GM23248 (cell line): ENCODE measurements at regions of chr1 and their contacts with region 1.

Region 1: DNA sequence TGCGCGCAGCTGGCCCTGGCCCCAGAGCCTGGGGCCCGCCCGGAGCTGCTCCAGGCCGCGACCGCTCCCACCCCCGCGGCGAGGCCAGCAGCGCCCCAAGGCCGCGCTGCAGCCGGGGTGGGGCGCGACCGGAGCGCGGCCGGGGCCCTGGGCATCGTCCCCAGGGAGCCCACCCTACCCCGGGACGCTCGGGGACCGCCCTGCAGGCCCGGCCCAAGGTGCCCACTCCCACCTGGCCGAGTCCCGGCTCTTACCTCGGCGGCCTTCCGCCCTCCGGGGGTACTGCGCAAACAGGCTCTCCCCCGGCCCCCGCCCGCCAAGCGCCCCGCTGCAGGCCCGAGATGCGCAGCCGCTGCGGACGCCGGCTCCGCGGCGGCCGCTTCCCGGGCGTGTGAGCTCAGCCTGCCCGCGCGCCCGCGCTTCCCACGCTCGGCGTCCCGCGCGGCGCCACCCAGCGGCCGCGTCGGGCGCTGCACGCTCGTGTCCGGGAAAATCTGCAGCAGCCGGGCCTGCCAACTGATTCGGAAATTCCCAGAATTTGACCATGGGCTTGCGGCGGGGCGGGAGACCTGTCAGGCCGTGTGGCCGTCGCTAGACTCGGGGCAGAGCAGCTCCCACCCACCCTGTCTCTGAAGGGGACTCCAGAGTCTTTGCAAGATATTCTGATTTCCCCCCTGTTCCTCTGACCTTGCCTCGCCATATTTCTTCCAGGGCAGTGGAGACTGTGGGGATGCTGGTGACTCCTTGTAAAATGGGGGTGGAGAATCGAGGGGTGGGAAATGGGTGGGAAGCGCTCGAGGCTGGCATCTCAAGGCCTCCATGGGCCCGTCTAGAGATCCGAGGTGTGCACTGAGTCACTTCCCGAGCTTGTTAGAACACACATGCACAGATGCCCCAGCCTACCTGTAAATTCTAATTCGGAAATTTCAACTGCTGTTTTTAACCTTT is 41.9 kb downstream of the CD34 start:
- DNase-seq: peak; percentile 88
- H3K4me3 ChIP-seq: peak overlapping the region; percentile 81
- H3K27ac ChIP-seq: no peak overlapping the region
- H3K4me1 ChIP-seq: no peaks in the 10 kb centered on the region
- H3K27me3 ChIP-seq: no peaks in the 10 kb centered on the region

Region 2: DNA sequence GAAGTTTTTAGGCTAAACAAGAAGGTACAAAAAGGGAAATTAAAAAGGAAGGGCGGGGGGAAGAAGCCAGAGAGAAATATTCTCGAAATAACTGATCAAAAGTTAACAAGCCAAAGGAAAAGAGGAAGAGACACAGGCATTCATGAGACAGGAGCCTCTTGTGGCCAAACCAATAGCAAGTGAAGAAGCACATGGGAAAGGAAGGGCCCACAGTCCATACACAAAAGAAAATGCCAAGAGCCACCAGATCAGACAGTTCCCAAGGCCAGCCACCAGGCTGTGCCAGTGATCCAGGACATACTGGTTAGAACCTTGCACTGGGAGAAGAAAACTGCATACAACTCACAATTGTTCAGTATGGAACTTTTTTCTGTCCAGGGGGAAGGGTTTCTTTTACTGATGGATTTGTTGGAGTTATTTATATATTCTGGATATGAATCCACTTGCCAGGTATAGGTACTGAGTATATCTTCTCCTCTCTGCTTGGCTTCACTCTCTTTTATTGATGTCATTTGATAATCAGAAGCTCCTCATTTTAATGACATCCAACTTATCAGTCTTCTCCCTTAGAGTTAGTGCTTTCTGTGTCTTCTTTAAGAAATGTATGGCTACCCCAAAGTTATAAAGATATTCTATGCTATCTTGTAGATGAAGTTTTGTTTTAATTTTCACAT is 40.4 kb before region 1 on chr1:
- in situ Hi-C with region 1: loop called (anchors 5 kb)
- DNase-seq: peak; percentile 89
- H3K4me3 ChIP-seq: no peak overlapping the region
- H3K27ac ChIP-seq: no peak overlapping the region
- H3K4me1 ChIP-seq: peaks cover 9% of the 10 kb centered on the region
- H3K27me3 ChIP-seq: no peaks in the 10 kb centered on the region

Region 3: GRCh38 chr1:207935166-207935583 is 66.1 kb after region 1 on chr1:
- in situ Hi-C with region 1: no loop called
- DNase-seq: no peak
- H3K4me3 ChIP-seq: no peak overlapping the region
- H3K27ac ChIP-seq: no peak overlapping the region
- H3K4me1 ChIP-seq: peaks cover 12% of the 10 kb centered on the region
- H3K27me3 ChIP-seq: no peaks in the 10 kb centered on the region